Activated naive CD4-positive, alpha-beta T cell treated with anti-CD3 and anti-CD28 coated beads, Interleukin-2, amount 10 ng/mL, durations not matched to agents 7 days and 5 days (primary cell): ENCODE measurements at regions of chr10 and their contacts with region 1.

Region 1: DNA sequence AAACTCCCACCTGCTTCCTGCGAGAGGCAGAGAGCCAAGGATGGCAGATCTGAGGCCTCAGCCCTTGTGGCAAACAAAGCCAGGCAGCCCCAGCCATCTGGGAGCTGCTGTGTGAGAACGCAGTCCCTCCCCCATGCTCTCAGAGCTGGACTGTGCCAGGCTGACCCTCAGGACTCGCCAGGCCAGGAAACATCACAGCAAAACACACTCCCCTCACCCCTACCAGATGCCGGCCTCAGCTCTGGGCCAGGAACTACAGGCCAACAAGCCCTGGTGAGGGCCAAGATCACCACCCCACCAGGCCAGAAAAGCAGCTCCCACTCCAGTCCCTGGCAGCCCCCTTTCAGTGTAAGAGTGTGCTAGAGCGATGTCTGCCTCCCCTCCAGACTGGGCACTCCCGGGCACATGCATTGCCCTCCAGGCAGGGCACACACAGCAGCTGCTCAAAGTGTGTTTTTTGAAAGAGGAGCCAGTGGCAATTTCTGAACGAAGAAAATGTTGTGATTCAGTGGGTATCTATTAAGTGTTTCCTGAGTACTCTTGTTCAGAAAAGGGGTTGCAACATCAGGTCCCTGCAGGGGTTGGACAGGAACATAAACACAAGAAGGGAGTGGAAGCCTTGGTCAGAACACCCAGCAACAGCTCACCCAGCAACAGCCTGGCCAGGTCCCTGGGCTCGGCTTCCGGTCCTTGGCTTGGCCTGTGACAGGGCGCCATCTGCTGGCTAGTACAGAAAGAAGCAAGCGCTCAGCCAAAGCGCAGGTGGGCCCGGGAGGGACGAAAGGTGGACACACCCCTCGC is 18.3 kb downstream of the LRRC20 start:
- DNase-seq: peak; percentile 90
- H3K4me3 Mint-ChIP-seq: no peak overlapping the region
- H3K27ac Mint-ChIP-seq: no peak overlapping the region
- H3K4me1 Mint-ChIP-seq: peaks cover 10% of the 10 kb centered on the region
- H3K27me3 Mint-ChIP-seq: no peaks in the 10 kb centered on the region

Region 2: DNA sequence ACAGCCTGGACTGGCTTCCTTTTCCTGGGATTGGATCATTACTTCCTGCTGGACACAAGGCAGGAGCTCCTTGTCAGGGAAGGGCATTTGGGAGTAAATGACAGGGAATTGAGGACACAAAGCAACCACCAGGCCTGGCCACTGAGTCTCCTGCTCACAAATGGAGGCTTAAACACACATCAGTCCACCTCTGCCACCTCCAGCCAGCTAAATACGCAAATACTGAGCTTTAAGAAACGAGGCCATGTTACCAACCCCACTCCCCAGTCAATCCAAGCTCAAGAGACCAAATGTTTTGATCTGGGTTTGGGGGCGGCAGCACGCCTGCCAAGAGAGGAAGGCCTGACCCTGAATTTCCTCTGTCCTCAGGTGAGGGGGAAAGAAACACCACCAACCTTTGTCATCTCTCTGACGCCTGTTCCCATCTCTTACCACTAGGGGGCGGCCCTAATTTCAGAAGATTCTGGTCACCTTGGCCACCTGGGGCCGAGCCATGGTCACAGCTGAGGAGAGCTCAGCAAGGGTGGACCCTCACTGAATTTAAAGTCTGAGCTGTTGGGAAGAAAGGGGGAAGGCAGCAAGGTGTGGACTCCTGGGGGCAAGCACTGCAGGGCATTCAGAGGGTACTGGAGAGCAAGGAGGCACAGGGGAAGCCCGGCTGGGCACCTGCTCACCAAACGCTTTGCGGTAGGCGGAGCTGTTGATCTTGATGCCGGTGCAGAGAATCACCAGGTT is 248.1 kb before region 1 on chr10:
- CTCF ChIA-PET with region 1: interaction called, 17 read pairs
- DNase-seq: peak; percentile 68
- H3K4me3 Mint-ChIP-seq: no peak overlapping the region
- H3K27ac Mint-ChIP-seq: no peak overlapping the region
- H3K4me1 Mint-ChIP-seq: peaks cover 10% of the 10 kb centered on the region
- H3K27me3 Mint-ChIP-seq: peaks cover 3% of the 10 kb centered on the region

Region 3: DNA sequence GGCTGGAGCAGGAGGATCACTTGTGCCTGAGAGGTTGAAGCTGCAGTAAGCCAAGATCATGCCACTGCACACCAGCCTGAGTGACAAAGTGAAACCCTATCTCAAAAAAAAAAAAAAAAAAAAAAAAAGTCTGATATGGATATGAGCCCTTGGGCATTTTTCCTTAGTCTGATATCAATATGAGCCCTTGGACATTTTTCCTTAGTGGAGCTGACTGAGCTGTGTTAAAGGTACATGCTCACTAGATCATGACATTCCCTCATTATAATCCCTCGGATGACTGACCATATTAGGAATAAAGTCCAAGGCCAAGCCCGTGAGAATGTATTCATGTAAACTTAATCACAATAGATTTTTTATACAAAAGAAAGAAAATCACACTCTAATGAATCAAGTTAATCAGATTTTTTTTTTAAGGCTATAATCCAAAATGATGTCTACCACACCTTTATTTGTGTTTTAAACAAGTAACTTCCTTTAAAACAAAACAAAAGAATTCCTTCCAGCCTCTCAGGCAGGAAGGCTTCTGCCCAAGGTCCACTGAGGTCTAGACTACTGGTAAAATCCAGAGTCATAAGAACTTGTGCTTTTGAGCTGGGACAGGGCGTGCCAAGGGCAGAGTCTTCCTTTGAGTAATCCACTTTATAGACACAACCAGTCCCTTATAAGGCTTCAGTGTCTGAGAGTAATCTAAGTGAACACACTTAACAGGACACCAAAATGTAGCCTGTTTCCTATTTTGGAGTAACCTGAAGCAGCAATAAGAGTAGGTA is 136.4 kb before region 1 on chr10:
- CTCF ChIA-PET with region 1: interaction called, 284 read pairs
- DNase-seq: no peak
- H3K4me3 Mint-ChIP-seq: no peak overlapping the region
- H3K27ac Mint-ChIP-seq: no peak overlapping the region
- H3K4me1 Mint-ChIP-seq: peaks cover 45% of the 10 kb centered on the region
- H3K27me3 Mint-ChIP-seq: no peaks in the 10 kb centered on the region

Region 4: DNA sequence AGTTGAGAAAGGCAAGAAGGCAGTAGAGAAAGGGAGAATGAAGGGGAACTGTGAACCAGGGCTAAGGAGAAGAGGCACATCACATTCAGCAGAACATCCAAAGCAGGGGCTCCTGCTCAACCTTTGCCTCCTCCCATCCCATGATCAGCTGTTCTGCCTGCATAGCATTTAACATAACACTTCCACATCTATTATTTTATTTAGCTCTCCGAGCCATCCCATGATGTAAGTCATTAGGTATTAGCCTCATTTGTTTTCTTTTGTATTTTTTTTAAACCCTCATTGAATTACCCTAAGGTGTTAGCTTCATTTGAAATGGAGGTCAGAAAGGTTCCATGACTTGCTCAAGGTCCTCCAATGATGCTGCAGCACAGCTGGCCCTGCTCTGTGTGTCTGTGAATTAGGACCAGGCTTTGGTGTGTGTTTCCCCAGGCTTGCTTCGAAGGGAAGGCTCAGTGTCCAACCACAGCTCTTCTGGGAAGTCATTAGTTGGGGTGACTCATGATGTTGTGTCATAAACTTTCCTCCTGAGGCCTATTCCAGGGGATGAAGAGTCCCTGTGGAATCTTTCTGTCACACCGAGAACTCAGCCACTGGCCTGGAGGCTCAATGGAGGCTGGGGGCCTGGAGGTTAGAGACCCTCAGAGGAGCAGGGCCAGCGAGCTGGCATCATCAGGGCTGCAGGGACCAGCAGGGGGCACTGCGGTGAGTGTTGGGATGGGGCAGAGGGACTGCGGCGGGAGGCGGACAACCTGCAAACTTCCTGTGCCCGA is 96.8 kb before region 1 on chr10:
- CTCF ChIA-PET with region 1: interaction called, 24 read pairs
- DNase-seq: no peak
- H3K4me3 Mint-ChIP-seq: no peak overlapping the region
- H3K27ac Mint-ChIP-seq: no peak overlapping the region
- H3K4me1 Mint-ChIP-seq: peaks cover 17% of the 10 kb centered on the region
- H3K27me3 Mint-ChIP-seq: peaks cover 17% of the 10 kb centered on the region

Region 5: GRCh38 chr10:70374775-70375614 is 10.8 kb after region 1 on chr10:
- CTCF ChIA-PET with region 1: interaction called, 21 read pairs
- DNase-seq: no peak
- H3K4me3 Mint-ChIP-seq: no peak overlapping the region
- H3K27ac Mint-ChIP-seq: no peak overlapping the region
- H3K4me1 Mint-ChIP-seq: peaks cover 4% of the 10 kb centered on the region
- H3K27me3 Mint-ChIP-seq: no peaks in the 10 kb centered on the region

Region 6: DNA sequence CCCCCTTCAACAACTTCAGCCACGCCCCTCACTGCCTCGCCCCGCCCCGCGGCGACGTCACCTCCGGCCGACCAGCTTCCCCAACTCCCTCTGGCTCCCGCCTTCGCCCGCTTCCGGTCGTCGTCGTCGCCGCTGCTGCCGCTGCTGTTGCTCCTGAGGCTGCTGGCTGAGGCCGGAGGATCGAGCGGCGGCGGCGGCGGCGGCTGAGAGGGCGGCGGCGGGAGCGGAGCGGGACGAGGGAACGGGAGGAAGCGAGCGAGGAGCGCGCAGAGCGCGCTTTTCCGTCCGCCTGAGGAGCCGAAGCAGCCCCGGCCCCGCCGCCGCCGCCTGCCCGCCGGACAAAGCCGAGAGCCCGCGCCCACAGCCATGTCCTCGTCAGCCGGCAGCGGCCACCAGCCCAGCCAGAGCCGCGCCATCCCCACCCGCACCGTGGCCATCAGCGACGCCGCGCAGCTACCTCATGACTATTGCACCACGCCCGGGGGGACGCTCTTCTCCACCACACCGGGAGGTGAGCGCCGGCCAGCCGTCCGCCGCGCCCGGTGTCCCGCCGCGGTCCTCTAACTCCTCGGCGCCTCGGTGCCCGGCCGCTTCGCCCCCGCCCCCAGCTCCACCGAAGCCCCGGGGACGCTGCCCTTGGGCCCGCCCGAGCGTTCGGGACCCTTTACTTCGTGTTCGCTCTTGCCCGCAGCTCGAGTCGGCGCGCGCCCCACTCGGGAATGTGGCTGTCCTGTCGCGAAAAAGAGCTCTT is 40.0 kb after region 1 on chr10 and contains the start of gene EIF4EBP2:
- CTCF ChIA-PET with region 1: interaction called, 19 read pairs
- DNase-seq: peak; percentile 99
- H3K4me3 Mint-ChIP-seq: peak within 1 kb of the TSS; percentile 99
- H3K27ac Mint-ChIP-seq: peak within 1 kb of the TSS; percentile 96
- H3K4me1 Mint-ChIP-seq: peaks cover 35% of the 10 kb centered on the region
- H3K27me3 Mint-ChIP-seq: peaks cover 4% of the 10 kb centered on the region

Region 7: GRCh38 chr10:70440296-70441160 is 76.4 kb after region 1 on chr10:
- CTCF ChIA-PET with region 1: no interaction called
- DNase-seq: no peak
- H3K4me3 Mint-ChIP-seq: peak overlapping the region; percentile 29
- H3K27ac Mint-ChIP-seq: no peak overlapping the region
- H3K4me1 Mint-ChIP-seq: peaks cover 13% of the 10 kb centered on the region
- H3K27me3 Mint-ChIP-seq: peaks cover 86% of the 10 kb centered on the region